HEK293 (cell line): ENCODE measurements at regions of chr11 and their contacts with region 1.

Region 1: GRCh38 chr11:10307442-10308207 is 2.8 kb downstream of the ADM start:
- H3K4me3 ChIP-seq: peak overlapping the region; percentile 48
- H3K27ac ChIP-seq: peak overlapping the region; percentile 86
- H3K4me1 ChIP-seq: no peaks in the 10 kb centered on the region
- CTCF ChIP-seq: peak; percentile 97

Region 2: DNA sequence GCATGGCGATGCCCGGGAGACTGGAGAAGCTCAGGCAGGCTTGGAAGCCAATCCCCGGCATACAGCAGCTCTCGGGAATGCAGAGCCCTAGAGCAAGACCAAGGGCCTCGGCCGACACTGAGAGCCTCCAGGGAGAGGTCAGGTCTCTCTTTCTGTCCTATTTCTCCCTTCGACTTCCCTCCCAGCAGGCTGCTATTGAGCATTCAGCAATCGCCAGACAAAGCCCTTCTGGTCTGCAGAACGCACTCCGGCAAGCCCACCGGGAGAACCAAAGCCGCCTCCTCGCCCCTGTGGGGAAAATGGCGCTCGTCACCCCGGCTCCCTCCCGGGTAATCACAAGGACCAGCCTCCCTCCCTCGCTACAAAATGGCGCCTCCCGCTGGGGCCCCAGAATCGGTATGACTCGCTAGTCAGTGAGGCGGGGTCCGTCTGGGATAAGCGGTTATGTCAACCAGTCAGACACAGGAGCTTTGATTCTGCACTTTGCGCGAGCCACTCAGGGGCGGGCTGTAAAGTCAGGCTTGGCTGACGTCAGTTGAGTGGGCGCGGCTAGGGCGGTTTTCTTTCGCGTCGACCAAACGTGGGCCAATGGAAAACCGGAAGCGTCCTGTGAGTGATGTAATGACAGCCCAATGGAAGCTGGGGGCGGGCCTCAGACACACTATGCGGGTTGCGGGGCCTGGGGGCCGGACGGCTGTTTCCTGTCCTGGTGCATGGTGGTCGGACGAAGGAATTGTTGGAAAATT is 847.1 kb before region 1 on chr11 and contains the start of gene ZNF143:
- CTCF ChIA-PET with region 1: no interaction called
- POLR2A ChIA-PET with region 1: interaction called, 11 read pairs
- H3K4me3 ChIP-seq: peak within 1 kb of the TSS; percentile 93
- H3K27ac ChIP-seq: peak within 1 kb of the TSS; percentile 88
- H3K4me1 ChIP-seq: no peaks in the 10 kb centered on the region
- CTCF ChIP-seq: no peak

Region 3: GRCh38 chr11:9757809-9758636 is 549.6 kb before region 1 on chr11:
- CTCF ChIA-PET with region 1: interaction called, 5 read pairs
- POLR2A ChIA-PET with region 1: interaction called, 41 read pairs
- H3K4me3 ChIP-seq: peak overlapping the region; percentile 69
- H3K27ac ChIP-seq: peak overlapping the region; percentile 82
- H3K4me1 ChIP-seq: no peaks in the 10 kb centered on the region
- CTCF ChIP-seq: no peak

Region 4: DNA sequence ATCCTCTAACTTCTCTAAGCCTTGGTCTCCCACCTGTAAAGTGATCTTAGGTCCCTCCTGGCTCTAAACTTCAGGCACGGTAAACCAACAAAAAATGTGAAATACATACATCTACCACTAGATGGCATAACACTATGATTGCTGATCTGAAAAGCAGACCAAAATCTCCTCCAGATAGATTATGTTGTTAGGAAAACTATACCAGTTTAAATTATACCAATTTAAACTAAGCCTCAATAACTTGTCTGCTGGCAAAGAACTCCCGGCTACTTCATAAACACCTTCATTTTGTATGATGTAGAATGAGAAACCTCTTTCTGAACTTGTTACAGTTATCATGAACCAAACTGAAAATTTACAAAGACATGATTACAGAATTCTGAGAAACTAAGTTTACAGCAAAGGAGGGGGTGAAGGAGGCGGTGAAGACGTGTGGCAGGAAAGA is 99.5 kb before region 1 on chr11:
- CTCF ChIA-PET with region 1: interaction called, 68 read pairs
- POLR2A ChIA-PET with region 1: interaction called, 36 read pairs
- H3K4me3 ChIP-seq: no peak overlapping the region
- H3K27ac ChIP-seq: no peak overlapping the region
- H3K4me1 ChIP-seq: no peaks in the 10 kb centered on the region
- CTCF ChIP-seq: no peak

Region 5: GRCh38 chr11:10263929-10264328 is 43.7 kb before region 1 on chr11:
- CTCF ChIA-PET with region 1: no interaction called
- POLR2A ChIA-PET with region 1: interaction called, 25 read pairs
- H3K4me3 ChIP-seq: no peak overlapping the region
- H3K27ac ChIP-seq: no peak overlapping the region
- H3K4me1 ChIP-seq: no peaks in the 10 kb centered on the region
- CTCF ChIP-seq: no peak

Region 6: DNA sequence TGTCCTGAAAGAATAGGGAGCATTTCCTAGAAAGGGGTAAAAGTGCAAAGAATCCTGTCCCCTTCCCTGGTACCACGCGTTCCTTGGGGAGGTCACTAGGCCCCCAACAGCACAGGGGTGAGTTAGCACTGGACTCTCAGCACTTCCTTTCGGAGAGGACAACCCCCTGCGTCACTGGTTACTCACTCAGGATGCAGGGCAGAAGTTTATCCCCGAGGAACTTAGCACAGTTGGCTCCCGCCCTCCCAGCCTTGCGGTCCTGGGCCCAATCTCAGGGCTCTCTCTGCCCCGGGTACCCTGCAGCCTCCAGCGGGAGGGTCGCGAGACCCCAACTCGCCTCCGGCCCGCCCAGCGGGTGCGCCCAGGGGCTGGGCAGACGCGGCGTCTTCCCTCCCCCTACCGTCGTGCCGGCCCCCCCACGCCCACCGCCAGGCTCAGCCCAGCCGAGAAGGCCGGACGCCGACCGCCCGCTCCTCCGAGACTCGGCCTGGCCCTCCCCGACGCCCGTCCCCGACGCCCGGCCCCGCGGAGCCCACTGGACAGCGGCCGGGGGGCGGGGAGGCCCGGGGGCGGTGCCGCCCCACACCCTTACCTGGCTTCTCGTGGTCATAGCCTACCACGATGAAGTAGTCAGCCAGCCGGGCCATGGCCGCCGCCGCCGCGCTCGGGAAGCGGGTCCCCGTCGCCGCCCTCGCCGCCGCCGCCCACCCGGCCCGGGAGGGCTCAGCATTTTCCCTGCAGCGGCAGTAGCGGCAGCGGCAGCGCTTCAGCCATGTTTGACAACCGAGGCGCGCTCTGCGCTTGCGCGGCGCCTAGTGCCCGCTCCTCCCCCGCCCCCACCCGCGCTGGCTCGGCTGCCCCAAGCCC is 14.0 kb before region 1 on chr11 and contains the start of gene SBF2:
- CTCF ChIA-PET with region 1: interaction called, 5 read pairs
- POLR2A ChIA-PET with region 1: interaction called, 35 read pairs
- H3K4me3 ChIP-seq: peak within 1 kb of the TSS; percentile 75
- H3K27ac ChIP-seq: peak within 1 kb of the TSS; percentile 79
- H3K4me1 ChIP-seq: no peaks in the 10 kb centered on the region
- CTCF ChIP-seq: no peak

Region 7: GRCh38 chr11:10366568-10367370 is 59.1 kb after region 1 on chr11:
- CTCF ChIA-PET with region 1: interaction called, 18 read pairs
- POLR2A ChIA-PET with region 1: interaction called, 24 read pairs
- H3K4me3 ChIP-seq: no peak overlapping the region
- H3K27ac ChIP-seq: no peak overlapping the region
- H3K4me1 ChIP-seq: no peaks in the 10 kb centered on the region
- CTCF ChIP-seq: peak; percentile 64